ENCODE measurements at regions of chr4 and their contacts with region 1.

Region 1: DNA sequence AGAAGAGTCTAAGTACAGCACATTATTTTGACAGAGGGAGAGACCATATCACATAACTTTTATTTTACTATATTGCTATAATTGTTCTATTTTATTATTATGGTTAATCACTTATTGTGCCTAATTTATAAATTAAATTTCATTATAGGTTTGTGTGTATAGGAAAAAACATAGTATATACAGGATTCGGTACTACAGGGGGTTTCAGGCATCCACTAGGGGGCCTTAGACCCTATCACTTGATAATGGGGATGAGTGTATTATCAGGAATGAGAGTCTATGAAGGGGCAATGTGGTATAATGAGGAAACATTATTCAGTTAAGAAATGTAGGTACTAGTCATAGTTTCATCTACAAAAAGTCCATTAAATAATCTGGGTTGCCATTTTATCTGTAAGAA is 833.1 kb downstream of the C4orf33 start:
- DNase-seq: peak; percentile 64
- H3K4me3 ChIP-seq: no peak overlapping the region
- H3K27ac ChIP-seq: no peak overlapping the region
- H3K4me1 ChIP-seq: peaks cover 7% of the 10 kb centered on the region
- H3K27me3 ChIP-seq: no peaks in the 10 kb centered on the region
- CTCF ChIP-seq: peak; percentile 80

Region 2: DNA sequence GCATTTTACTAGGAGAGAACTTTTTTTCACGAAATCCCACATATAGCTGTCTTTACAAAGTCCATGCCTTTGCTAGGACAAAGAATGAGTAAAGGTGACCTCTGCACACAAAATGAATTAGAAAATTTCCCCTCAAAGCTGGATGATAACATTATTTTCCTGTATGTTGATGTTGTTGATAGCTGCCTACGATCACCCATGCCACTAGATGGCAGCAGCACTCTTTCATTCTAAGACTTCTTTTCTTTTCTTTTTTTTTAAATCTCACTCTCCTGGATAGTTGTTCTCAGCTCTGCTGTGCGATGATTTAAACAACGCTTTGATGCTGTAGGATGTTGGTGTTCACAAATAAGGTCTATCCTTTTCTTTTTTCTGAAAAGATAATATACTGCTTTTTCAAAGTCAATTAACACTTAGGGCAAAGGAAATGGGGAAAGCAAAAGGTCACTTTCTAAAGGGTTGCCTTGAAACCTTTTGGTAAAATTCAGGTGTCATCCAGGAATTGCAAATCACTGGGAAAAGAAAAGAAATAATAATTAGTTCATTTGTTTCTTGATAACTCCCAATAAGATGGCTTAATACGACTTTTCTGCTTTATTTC is 566.3 kb before region 1 on chr4:
- CTCF ChIA-PET with region 1: no interaction called
- POLR2A ChIA-PET with region 1: no interaction called
- intact Hi-C with region 1: loop called (anchors 10 kb)
- DNase-seq: peak; percentile 76
- H3K4me3 ChIP-seq: no peak overlapping the region
- H3K27ac ChIP-seq: no peak overlapping the region
- H3K4me1 ChIP-seq: no peaks in the 10 kb centered on the region
- H3K27me3 ChIP-seq: no peaks in the 10 kb centered on the region
- CTCF ChIP-seq: peak; percentile 88

Region 3: DNA sequence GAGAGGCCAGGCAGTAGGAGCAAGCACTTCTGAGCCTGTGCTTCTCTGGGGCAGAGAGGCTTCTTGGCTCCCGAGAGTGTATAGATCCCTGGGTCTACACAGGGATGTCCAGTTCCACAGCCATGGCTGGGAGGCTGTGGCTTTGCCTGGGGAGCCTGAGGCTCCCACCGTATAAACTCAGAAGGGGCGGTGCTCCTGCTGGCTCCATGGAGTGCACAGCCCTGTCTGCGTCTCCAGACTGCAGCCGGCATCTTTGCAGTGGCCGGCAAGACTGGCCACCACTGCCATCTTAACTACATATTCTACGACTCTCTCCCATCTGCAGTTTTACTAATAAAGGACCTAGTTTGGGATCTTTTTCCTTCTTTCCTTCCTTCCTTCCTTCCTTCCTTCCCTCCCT is 420.7 kb after region 1 on chr4:
- CTCF ChIA-PET with region 1: no interaction called
- POLR2A ChIA-PET with region 1: no interaction called
- intact Hi-C with region 1: loop called (anchors 5 kb)
- DNase-seq: no peak
- H3K4me3 ChIP-seq: no peak overlapping the region
- H3K27ac ChIP-seq: no peak overlapping the region
- H3K4me1 ChIP-seq: no peaks in the 10 kb centered on the region
- H3K27me3 ChIP-seq: no peaks in the 10 kb centered on the region
- CTCF ChIP-seq: no peak

Region 4: GRCh38 chr4:130747842-130748241 is 818.8 kb after region 1 on chr4:
- CTCF ChIA-PET with region 1: no interaction called
- POLR2A ChIA-PET with region 1: no interaction called
- intact Hi-C with region 1: loop called (anchors 10 kb)
- DNase-seq: peak; percentile 29
- H3K4me3 ChIP-seq: no peak overlapping the region
- H3K27ac ChIP-seq: no peak overlapping the region
- H3K4me1 ChIP-seq: no peaks in the 10 kb centered on the region
- H3K27me3 ChIP-seq: no peaks in the 10 kb centered on the region
- CTCF ChIP-seq: peak; percentile 61

Region 5: GRCh38 chr4:131091896-131092295 is 1162.8 kb after region 1 on chr4:
- CTCF ChIA-PET with region 1: no interaction called
- POLR2A ChIA-PET with region 1: no interaction called
- intact Hi-C with region 1: loop called (anchors 10 kb)
- DNase-seq: peak; percentile 64
- H3K4me3 ChIP-seq: no peak overlapping the region
- H3K27ac ChIP-seq: no peak overlapping the region
- H3K4me1 ChIP-seq: no peaks in the 10 kb centered on the region
- H3K27me3 ChIP-seq: no peaks in the 10 kb centered on the region
- CTCF ChIP-seq: peak; percentile 66

Measured in A673 (cell line).